Heart left ventricle (tissue), 16 donors: ENCODE measurements at regions of chr5 and their contacts with region 1.

Region 1: DNA sequence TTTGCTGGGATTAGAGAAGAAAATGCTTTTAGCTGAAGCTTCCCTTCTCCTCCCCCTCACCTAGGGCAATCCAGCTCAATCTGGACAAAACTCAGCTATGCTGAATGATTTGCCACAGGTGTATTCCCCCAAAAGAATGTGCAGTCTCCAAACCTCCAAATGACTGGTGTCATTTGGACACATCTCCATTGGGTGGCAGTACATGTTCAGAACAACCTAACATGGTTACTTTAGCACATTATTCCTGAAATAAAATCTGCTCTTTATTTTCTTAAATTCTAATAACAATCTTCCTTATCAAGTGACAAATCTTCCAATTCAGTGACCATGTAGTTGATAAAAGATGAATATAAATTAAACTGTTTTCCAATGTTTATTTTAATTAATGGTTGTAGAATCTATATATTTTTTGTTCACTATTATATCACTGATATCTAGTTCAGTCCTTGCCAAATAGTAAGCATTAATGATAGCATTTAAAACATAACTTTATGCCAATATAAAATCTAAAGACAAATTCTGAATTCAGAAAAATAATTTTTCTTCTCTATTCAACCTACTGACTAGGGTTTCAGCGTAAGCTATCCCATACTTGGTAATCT is 61.3 kb upstream of the MOCS2 start:
- DNase-seq: no peak
- ATAC-seq: peak in 1 of 4 donors; percentile 62
- H3K4me3 ChIP-seq: no peak overlapping the region
- H3K27ac ChIP-seq: no peak overlapping the region
- H3K4me1 ChIP-seq: peaks cover 0 to 25% (median 5%) of the 10 kb centered on the region in 12 donors
- H3K27me3 ChIP-seq: peaks cover 0 to 4% (median 0%) of the 10 kb centered on the region in 9 donors
- CTCF ChIP-seq: peak; percentile 32 to 66 (median 54)
- POLR2A ChIP-seq: no peak

Region 2: GRCh38 chr5:53425598-53426511 is 255.0 kb after region 1 on chr5:
- intact Hi-C with region 1: loop called in 5 of 10 experiments (anchors 5 to 10 kb)
- DNase-seq: no peak
- ATAC-seq: no peak
- H3K4me3 ChIP-seq: no peak overlapping the region
- H3K27ac ChIP-seq: no peak overlapping the region
- H3K4me1 ChIP-seq: peaks cover 0 to 11% (median 0%) of the 10 kb centered on the region in 12 donors
- H3K27me3 ChIP-seq: no peaks in the 10 kb centered on the region
- CTCF ChIP-seq: peak in 5 of 12 donors; percentile 14 to 28 (median 17)
- POLR2A ChIP-seq: no peak

Region 3: GRCh38 chr5:54212331-54212730 is 1041.5 kb after region 1 on chr5:
- intact Hi-C with region 1: loop called in 1 of 10 experiments (anchors 5 kb)
- DNase-seq: no peak
- ATAC-seq: no peak
- H3K4me3 ChIP-seq: no peak overlapping the region
- H3K27ac ChIP-seq: no peak overlapping the region
- H3K4me1 ChIP-seq: peaks cover 0 to 51% (median 8%) of the 10 kb centered on the region in 12 donors
- H3K27me3 ChIP-seq: no peaks in the 10 kb centered on the region
- CTCF ChIP-seq: no peak
- POLR2A ChIP-seq: no peak

Region 4: DNA sequence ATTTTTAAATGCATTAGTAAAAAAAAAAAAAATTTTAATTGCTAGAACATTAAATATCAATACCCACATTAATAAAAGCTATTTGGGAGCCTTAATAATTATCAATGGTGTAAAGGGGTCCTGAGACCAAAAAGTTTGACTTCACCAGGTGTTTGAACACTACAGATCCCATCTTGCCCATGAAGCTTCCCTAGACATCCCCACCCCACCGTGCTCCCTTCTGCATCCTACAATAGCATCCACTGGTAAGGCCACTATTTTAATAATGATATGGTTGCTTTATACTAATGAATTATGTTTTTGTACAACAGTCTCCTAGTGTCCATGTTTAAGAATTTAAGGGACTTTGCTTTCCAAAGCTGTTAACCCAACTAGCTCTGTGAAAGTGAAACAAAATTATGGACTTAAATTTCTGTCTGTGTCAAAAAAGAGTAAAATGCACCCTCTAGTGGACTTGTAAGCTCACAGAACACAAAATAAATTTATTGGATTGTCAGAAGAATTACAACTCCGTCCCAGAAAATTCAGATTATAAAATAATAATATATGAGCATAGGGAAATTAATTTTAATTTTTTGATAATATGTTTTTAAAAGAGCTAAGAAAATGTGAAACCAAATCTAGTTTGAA is 1063.6 kb after region 1 on chr5:
- intact Hi-C with region 1: loop called in 7 of 10 experiments (anchors 5 to 10 kb)
- DNase-seq: no peak
- ATAC-seq: no peak
- H3K4me3 ChIP-seq: peak overlapping the region in 3 of 12 donors; percentile 3 to 30 (median 16)
- H3K27ac ChIP-seq: no peak overlapping the region
- H3K4me1 ChIP-seq: peaks cover 0 to 47% (median 17%) of the 10 kb centered on the region in 12 donors
- H3K27me3 ChIP-seq: no peaks in the 10 kb centered on the region
- CTCF ChIP-seq: peak; percentile 37 to 70 (median 48)
- POLR2A ChIP-seq: no peak